ENCODE measurements at regions of chr17 and their contacts with region 1.

Region 1: DNA sequence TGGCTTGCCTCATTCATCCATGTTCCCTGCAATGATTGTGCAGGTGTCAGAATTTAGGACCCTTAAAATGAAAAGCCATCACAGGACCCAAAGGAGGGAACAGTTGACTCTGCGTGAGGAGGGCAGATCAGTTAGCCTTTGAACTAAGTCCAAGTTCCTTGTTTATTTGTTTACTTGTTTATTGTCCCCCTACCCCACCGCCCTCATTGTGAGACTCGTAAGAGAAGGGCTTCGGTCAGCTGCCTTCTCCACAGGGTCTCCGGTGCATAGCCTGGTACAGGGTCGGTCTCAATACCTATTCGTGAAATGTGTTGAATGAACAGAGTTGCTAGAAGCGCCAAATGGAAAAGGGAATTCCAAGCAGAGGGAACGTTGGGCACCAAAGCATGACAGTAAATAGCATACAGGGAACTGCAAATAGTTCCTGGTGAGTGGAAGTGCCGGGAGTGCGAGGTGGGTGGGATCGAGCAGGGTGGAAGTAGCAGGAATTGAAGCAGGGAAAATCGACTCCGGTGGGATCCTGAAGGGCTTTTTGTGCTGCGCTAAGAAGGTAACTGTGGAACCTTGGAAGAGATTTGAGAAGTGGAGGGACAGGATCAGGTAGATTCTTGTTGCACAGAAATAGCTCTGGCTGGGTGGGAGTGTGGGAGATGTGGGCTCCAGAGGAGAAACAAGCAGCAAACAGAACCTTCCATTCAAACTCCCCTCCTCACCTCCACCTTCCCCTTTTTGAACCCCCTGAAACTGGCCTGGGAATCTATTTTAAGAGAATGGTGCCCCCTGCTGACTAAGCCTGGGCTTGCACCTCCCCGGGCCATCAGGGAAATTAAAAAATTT is 12.7 kb downstream of the SLC35B1 start:
- DNase-seq: peak in 1 of 2 experiments; percentile 46
- H3K4me3 ChIP-seq: no peak overlapping the region
- H3K27ac ChIP-seq: no peak overlapping the region
- H3K4me1 ChIP-seq: no peaks in the 10 kb centered on the region
- H3K27me3 ChIP-seq: peaks cover 8% of the 10 kb centered on the region; the same call in 1 of the 2 replicates
- CTCF ChIP-seq: peak; percentile 99

Region 2: GRCh38 chr17:49414622-49415350 is 280.3 kb before region 1 on chr17 and contains the start of gene PHB1:
- CTCF ChIA-PET with region 1: no interaction called
- POLR2A ChIA-PET with region 1: no interaction called
- intact Hi-C with region 1: loop called (anchors 10 kb)
- DNase-seq: peak; percentile 94 to 98
- H3K4me3 ChIP-seq: peak within 1 kb of the TSS; percentile 72
- H3K27ac ChIP-seq: no peak within 1 kb of the TSS
- H3K4me1 ChIP-seq: peaks cover 14% of the 10 kb centered on the region
- H3K27me3 ChIP-seq: no peaks in the 10 kb centered on the region
- CTCF ChIP-seq: no peak
- total RNA-seq, gene PHB1: 197 and 244 TPM in 2 replicates

Region 3: DNA sequence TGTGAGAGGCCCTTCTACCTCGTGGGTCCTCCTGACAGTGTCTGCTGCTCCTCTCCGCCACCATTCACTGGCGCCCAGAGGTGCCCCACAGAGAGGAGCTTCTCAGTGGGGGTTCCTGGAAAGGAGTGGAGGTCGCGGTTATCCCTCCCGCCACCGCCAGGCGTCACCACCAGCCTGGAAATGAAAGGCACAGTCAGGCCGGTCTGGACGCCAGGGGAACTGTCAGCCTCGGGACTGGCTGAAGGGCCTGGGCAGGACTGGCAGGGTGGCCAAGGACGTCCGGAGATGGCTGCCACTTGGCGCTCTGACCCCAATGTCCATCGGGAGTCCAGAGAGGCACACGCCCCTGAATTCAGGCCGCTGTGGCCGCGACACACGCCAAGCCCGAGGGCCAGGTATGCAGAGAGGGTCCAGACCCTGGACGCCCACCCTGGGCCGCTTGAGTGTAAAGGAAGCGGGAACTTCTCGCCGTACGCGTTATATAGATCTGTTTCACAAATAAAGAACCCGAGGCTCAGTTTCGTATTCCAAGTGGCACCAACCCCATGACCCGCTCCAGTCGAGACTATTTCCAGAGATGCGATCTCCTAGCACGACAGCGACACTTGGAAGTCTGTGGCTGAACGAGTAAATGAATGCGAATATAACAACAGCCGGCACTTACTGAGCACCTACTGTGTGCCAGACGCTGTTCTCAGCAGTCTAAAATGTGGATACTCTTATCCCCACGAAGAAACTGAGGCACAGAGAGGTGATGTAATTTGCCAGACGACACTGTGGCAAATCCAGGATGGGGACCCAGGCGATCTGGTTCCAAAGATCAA is 127.0 kb before region 1 on chr17:
- CTCF ChIA-PET with region 1: interaction called, 3 read pairs
- POLR2A ChIA-PET with region 1: no interaction called
- intact Hi-C with region 1: loop called (anchors 1 kb)
- DNase-seq: peak; percentile 69 to 88
- H3K4me3 ChIP-seq: peak overlapping the region; percentile 38; the same call in 1 of the 2 replicates
- H3K27ac ChIP-seq: no peak overlapping the region
- H3K4me1 ChIP-seq: 0 out of 2 replicates have a peak, but pooled peaks cover 6% of the 10 kb centered on the region
- H3K27me3 ChIP-seq: peaks cover 28% of the 10 kb centered on the region
- CTCF ChIP-seq: peak; percentile 99

Region 4: GRCh38 chr17:49616601-49617131 is 78.4 kb before region 1 on chr17:
- CTCF ChIA-PET with region 1: interaction called, 10 read pairs
- POLR2A ChIA-PET with region 1: no interaction called
- intact Hi-C with region 1: no loop called
- DNase-seq: no peak
- H3K4me3 ChIP-seq: no peak overlapping the region
- H3K27ac ChIP-seq: no peak overlapping the region
- H3K4me1 ChIP-seq: no peaks in the 10 kb centered on the region
- H3K27me3 ChIP-seq: no peaks in the 10 kb centered on the region
- CTCF ChIP-seq: no peak

Region 5: GRCh38 chr17:49763735-49764558 is 68.9 kb after region 1 on chr17 and contains the start of gene FAM117A:
- CTCF ChIA-PET with region 1: no interaction called
- POLR2A ChIA-PET with region 1: interaction called, 24 read pairs
- intact Hi-C with region 1: no loop called
- DNase-seq: peak; percentile 97 to 99
- H3K4me3 ChIP-seq: peak within 1 kb of the TSS; percentile 54
- H3K27ac ChIP-seq: no peak within 1 kb of the TSS
- H3K4me1 ChIP-seq: peaks cover 4% of the 10 kb centered on the region; the same call in 1 of the 2 replicates
- H3K27me3 ChIP-seq: no peaks in the 10 kb centered on the region
- CTCF ChIP-seq: no peak; the same call in 1 of the 2 replicates
- total RNA-seq, gene FAM117A: 12.7 and 15.0 TPM in 2 replicates

Region 6: DNA sequence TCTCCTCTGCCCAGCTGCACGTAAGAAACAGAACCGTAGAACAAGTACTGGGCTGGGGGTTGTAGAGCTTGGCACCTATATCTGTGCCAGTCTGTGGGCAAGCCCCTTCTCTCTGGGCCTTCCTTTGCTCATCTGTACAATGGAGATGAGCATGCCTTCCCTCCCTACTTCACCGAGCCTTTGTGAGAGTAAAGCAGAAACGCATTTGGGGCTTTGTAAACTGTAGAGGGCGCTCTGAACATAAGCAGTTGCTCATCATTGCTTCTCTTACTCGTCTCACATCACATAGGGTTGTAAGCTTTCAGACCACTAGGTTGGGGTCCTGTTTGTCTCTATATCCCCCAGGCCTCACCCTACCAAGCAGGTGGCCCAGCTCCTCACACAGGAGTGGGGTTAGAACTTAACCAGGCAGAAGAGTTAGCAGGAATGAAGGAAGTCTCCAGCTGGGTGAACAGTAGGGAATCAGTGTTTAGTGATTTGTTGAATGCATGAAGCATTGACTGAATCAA is 419.8 kb after region 1 on chr17:
- CTCF ChIA-PET with region 1: no interaction called
- POLR2A ChIA-PET with region 1: no interaction called
- intact Hi-C with region 1: no loop called
- DNase-seq: peak; percentile 31 to 56
- H3K4me3 ChIP-seq: no peak overlapping the region
- H3K27ac ChIP-seq: no peak overlapping the region
- H3K4me1 ChIP-seq: 0 out of 2 replicates have a peak, but pooled peaks cover 5% of the 10 kb centered on the region
- H3K27me3 ChIP-seq: peaks cover 33% of the 10 kb centered on the region
- CTCF ChIP-seq: peak; percentile 79